ENCODE measurements at regions of chr9 and their contacts with region 1.

Region 1: GRCh38 chr9:4750023-4750673 is 9.1 kb upstream of the AK3 start:
- DNase-seq: peak in 1 of 2 donors; percentile 67
- H3K4me3 ChIP-seq: no peak overlapping the region
- H3K27ac ChIP-seq: no peak overlapping the region
- H3K4me1 ChIP-seq: no peaks in the 10 kb centered on the region
- H3K27me3 ChIP-seq: no peaks in the 10 kb centered on the region
- CTCF ChIP-seq: peak in 4 of 7 experiments; percentile 40 to 46 (median 44)
- EP300 ChIP-seq: no peak
- POLR2A ChIP-seq: no peak

Region 2: DNA sequence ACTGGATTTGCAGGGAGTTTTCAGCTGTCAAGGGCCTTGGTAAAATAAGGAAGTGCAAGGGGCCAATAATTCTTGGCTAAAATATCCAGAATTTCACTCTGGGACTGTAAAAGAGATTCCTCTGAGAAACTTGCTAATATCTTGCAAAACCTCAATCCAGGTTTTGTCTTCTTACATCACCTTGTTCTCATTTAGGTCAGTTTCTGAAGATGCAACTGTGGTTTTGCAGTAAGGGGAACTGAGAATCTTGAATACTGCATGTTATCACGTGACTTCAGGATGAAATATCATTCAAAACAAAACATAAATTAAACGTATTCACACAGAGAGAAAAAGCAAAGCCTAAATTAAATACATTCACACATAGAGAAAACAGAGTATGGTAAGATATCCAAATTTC is 843.8 kb after region 1 on chr9:
- intact Hi-C with region 1: loop called (anchors 10 kb)
- DNase-seq: no peak
- H3K4me3 ChIP-seq: no peak overlapping the region
- H3K27ac ChIP-seq: no peak overlapping the region
- H3K4me1 ChIP-seq: peaks cover 0 to 5% (median 2%) of the 10 kb centered on the region in 4 donors
- H3K27me3 ChIP-seq: no peaks in the 10 kb centered on the region
- CTCF ChIP-seq: no peak
- EP300 ChIP-seq: no peak
- POLR2A ChIP-seq: no peak

Measured in stomach (tissue), 19 donors.